ENCODE measurements at regions of chr14 and their contacts with region 1.

Region 1: GRCh38 chr14:76876076-76876475 is 49.9 kb downstream of the LRRC74A start:
- DNase-seq: peak; percentile 63 to 71
- H3K4me3 ChIP-seq: no peak overlapping the region
- H3K4me3 Mint-ChIP-seq: no peak overlapping the region
- H3K27ac Mint-ChIP-seq: no peak overlapping the region
- H3K4me1 ChIP-seq: no peaks in the 10 kb centered on the region
- H3K4me1 Mint-ChIP-seq: no peaks in the 10 kb centered on the region
- H3K27me3 ChIP-seq: no peaks in the 10 kb centered on the region
- H3K27me3 Mint-ChIP-seq: no peaks in the 10 kb centered on the region
- CTCF ChIP-seq: peak; percentile 86 to 94

Region 2: GRCh38 chr14:76426161-76426696 is 449.8 kb before region 1 on chr14:
- CTCF ChIA-PET with region 1: no interaction called
- POLR2A ChIA-PET with region 1: no interaction called
- intact Hi-C with region 1: no loop called
- DNase-seq: no peak
- H3K4me3 ChIP-seq: no peak overlapping the region
- H3K4me3 Mint-ChIP-seq: no peak overlapping the region
- H3K27ac Mint-ChIP-seq: no peak overlapping the region
- H3K4me1 ChIP-seq: no peaks in the 10 kb centered on the region
- H3K4me1 Mint-ChIP-seq: no peaks in the 10 kb centered on the region
- H3K27me3 ChIP-seq: no peaks in the 10 kb centered on the region; the same call in 1 of the 2 replicates
- H3K27me3 Mint-ChIP-seq: peaks cover 5% of the 10 kb centered on the region
- CTCF ChIP-seq: no peak

Region 3: GRCh38 chr14:76924371-76925096 is 48.5 kb after region 1 on chr14:
- CTCF ChIA-PET with region 1: no interaction called
- POLR2A ChIA-PET with region 1: no interaction called
- intact Hi-C with region 1: no loop called
- DNase-seq: no peak
- H3K4me3 ChIP-seq: no peak overlapping the region
- H3K4me3 Mint-ChIP-seq: no peak overlapping the region
- H3K27ac Mint-ChIP-seq: no peak overlapping the region
- H3K4me1 ChIP-seq: peaks cover 2% of the 10 kb centered on the region
- H3K4me1 Mint-ChIP-seq: peaks cover 3% of the 10 kb centered on the region
- H3K27me3 ChIP-seq: no peaks in the 10 kb centered on the region
- H3K27me3 Mint-ChIP-seq: no peaks in the 10 kb centered on the region
- CTCF ChIP-seq: no peak

Region 4: DNA sequence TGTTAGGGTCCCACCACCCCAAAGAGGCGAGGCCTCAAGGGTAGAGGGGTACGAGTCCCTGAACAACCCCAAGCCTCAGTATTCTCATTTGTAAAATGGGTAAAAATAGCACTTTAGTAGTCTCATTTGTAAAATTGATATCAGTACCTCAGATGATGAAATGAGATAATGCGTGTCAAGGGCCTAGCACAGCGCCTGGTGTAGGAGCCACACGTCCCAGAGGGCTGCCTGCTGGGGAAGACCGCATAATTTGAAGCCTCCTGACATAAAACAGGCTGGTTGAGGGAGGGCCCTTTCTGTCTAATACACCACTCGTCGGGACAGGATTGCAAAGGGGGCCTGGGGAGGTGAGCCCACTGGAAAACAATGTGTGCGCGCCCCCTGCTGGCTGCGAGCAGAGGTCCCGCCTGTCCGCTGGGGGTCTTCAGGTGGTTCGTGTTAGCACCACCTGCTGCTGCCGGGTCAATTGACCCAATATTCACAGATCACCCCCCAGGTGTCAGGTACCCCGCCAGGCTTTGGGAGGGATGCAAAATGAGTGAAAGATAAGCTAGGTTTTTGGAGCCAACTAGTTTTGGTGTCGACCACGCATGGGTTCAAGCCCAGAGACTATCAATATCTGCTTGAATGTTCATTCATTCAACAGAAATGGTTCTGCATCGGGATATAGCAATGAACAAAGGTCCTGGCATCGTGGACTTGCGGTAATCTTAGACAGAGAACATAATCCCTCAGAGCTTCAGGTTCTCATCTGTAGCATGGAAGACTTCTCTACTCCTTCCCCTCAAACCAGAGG is 177.2 kb after region 1 on chr14:
- CTCF ChIA-PET with region 1: interaction called, 10 read pairs
- POLR2A ChIA-PET with region 1: no interaction called
- intact Hi-C with region 1: loop called (anchors 1 kb)
- DNase-seq: peak; percentile 79 to 84
- H3K4me3 ChIP-seq: no peak overlapping the region
- H3K4me3 Mint-ChIP-seq: no peak overlapping the region
- H3K27ac Mint-ChIP-seq: no peak overlapping the region
- H3K4me1 ChIP-seq: peaks cover 6% of the 10 kb centered on the region; the same call in 1 of the 2 replicates
- H3K4me1 Mint-ChIP-seq: no peaks in the 10 kb centered on the region
- H3K27me3 ChIP-seq: no peaks in the 10 kb centered on the region
- H3K27me3 Mint-ChIP-seq: no peaks in the 10 kb centered on the region
- CTCF ChIP-seq: peak; percentile 93 to 94

Region 5: GRCh38 chr14:77067632-77068514 is 191.8 kb after region 1 on chr14:
- CTCF ChIA-PET with region 1: interaction called, 144 read pairs
- POLR2A ChIA-PET with region 1: no interaction called
- intact Hi-C with region 1: loop called (anchors 1 kb)
- DNase-seq: peak; percentile 65 to 82
- H3K4me3 ChIP-seq: no peak overlapping the region
- H3K4me3 Mint-ChIP-seq: no peak overlapping the region
- H3K27ac Mint-ChIP-seq: no peak overlapping the region
- H3K4me1 ChIP-seq: no peaks in the 10 kb centered on the region
- H3K4me1 Mint-ChIP-seq: no peaks in the 10 kb centered on the region
- H3K27me3 ChIP-seq: no peaks in the 10 kb centered on the region
- H3K27me3 Mint-ChIP-seq: no peaks in the 10 kb centered on the region
- CTCF ChIP-seq: peak; percentile 87 to 94

Region 6: GRCh38 chr14:77151918-77152588 is 276.0 kb after region 1 on chr14:
- CTCF ChIA-PET with region 1: interaction called, 9 read pairs
- POLR2A ChIA-PET with region 1: no interaction called
- intact Hi-C with region 1: loop called (anchors 1 kb)
- DNase-seq: no peak
- H3K4me3 ChIP-seq: no peak overlapping the region
- H3K4me3 Mint-ChIP-seq: no peak overlapping the region
- H3K27ac Mint-ChIP-seq: no peak overlapping the region
- H3K4me1 ChIP-seq: no peaks in the 10 kb centered on the region
- H3K4me1 Mint-ChIP-seq: no peaks in the 10 kb centered on the region
- H3K27me3 ChIP-seq: no peaks in the 10 kb centered on the region
- H3K27me3 Mint-ChIP-seq: peaks cover 8% of the 10 kb centered on the region
- CTCF ChIP-seq: no peak

Measured in Caco-2 (cell line).